ENCODE measurements at regions of chr1 and their contacts with region 1.

Region 1: DNA sequence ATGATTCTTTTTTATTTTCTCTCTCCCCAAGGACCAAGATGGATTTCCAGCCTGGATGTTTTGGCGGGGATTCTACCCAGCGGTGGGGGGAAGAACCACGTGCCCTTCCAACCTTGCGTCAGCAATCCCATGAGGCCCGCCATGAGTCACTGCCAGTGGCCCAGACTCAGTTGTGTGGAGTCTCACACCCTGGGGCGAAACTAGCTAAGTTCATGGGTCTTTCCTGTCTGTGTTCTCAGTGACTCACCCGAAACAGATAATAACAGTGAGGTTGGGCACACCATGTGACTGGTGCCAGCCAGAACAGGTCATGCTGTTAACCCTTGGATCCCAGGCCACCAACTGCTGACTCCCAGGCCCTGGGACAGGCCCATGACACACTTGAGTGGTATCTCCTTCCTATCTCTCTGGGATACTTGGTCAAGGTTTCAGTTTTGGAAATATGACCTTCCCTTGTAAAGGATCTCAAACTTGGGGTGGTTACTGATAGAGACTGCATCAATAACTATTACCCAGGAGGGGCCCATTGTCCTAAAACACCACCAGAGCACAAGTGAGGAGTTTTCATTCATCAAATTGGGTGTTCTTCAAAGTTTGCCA is 98.0 kb upstream of the DUSP10 start:
- DNase-seq: peak; percentile 26
- H3K4me3 Mint-ChIP-seq: no peak overlapping the region
- H3K27ac Mint-ChIP-seq: peak overlapping the region; percentile 64
- H3K4me1 Mint-ChIP-seq: peaks cover 57% of the 10 kb centered on the region
- H3K27me3 Mint-ChIP-seq: peaks cover 2% of the 10 kb centered on the region

Region 2: DNA sequence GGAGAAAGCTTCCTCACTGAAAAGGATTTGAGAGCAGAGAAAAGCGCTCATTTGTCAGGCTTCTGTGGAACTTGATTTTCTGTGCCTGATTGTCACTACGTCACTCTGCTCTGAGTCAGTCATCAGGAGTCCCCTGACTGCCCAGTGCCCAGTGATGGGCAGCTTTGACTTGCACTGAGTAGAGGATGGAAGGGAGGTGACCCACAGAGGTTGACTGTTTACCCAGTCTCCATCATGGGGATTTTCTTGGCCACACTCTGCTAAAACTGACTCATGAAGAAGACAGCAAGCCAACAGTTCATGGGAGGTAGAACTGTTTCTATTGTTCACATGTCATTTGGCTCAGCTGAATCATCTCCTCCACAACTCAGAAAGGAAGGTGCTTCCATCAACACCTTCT is 15.9 kb before region 1 on chr1:
- intact Hi-C with region 1: loop called (anchors 1 kb)
- DNase-seq: no peak
- H3K4me3 Mint-ChIP-seq: no peak overlapping the region
- H3K27ac Mint-ChIP-seq: peak overlapping the region; percentile 24
- H3K4me1 Mint-ChIP-seq: peaks cover 65% of the 10 kb centered on the region
- H3K27me3 Mint-ChIP-seq: peaks cover 8% of the 10 kb centered on the region

Region 3: DNA sequence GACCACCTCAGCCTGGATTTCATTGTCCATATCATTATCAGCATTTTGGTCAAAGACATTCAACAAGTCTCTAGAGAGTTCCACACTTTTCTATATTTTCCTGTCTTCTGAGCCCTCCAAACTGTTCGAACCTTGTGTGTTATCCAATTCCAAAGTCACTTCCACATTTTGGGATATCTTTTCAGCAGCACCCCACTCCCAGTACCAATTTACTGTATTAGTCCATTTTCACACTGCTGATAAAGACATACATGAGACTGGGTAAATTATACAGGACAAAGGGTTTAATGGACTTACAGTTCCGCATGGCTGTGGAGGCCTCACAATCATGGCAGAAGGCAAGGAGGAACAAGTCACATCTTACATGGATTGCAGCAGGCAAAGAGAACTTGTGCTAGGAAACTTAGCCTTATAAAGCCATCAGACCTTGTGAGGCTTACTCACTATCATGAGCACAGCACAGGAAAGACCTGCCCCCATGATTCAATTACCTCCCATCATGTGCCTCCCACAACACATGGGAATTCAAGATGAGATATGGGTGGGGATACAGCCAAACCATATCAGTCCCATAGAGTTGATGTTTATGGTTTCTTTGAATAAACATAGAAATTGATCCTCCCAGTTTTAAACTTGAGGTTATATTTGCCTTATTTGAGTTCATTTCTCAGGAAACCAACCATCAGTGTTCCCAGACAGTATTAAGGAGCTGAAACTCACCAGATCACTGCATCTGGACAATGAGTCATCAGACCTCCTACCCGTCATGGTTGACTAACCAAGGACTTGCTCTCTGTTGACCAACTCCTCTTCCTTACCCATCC is 224.7 kb after region 1 on chr1:
- intact Hi-C with region 1: no loop called
- DNase-seq: no peak
- H3K4me3 Mint-ChIP-seq: no peak overlapping the region
- H3K27ac Mint-ChIP-seq: no peak overlapping the region
- H3K4me1 Mint-ChIP-seq: no peaks in the 10 kb centered on the region
- H3K27me3 Mint-ChIP-seq: no peaks in the 10 kb centered on the region

Measured in activated T-helper 1 cell treated with anti-CD3 and anti-CD28 coated beads, Interleukin-12 subunit alpha, Interleukin-12 subunit beta, Interleukin-2, Interleukin-4 antibody, amounts not matched to agents 30 ng/mL and 10 ng/mL and 1 ng/mL, durations not matched to agents 14 hours and 24 hours and 36 hours (primary cell).